ENCODE measurements at regions of chr19 and their contacts with region 1.

Region 1: GRCh38 chr19:17579661-17580244 is 24.3 kb downstream of the COLGALT1 start:
- DNase-seq: peak in 2 of 9 experiments; percentile 36 to 43
- ATAC-seq: peak; percentile 52
- H3K4me3 ChIP-seq: no peak overlapping the region
- H3K4me3 Mint-ChIP-seq: no peak overlapping the region
- H3K27ac ChIP-seq: no peak overlapping the region
- H3K27ac Mint-ChIP-seq: peak overlapping the region; percentile 55
- H3K4me1 ChIP-seq: no peaks in the 10 kb centered on the region
- H3K4me1 Mint-ChIP-seq: no peaks in the 10 kb centered on the region
- H3K27me3 ChIP-seq: no peaks in the 10 kb centered on the region
- H3K27me3 Mint-ChIP-seq: no peaks in the 10 kb centered on the region
- CTCF ChIP-seq: no peak

Region 2: DNA sequence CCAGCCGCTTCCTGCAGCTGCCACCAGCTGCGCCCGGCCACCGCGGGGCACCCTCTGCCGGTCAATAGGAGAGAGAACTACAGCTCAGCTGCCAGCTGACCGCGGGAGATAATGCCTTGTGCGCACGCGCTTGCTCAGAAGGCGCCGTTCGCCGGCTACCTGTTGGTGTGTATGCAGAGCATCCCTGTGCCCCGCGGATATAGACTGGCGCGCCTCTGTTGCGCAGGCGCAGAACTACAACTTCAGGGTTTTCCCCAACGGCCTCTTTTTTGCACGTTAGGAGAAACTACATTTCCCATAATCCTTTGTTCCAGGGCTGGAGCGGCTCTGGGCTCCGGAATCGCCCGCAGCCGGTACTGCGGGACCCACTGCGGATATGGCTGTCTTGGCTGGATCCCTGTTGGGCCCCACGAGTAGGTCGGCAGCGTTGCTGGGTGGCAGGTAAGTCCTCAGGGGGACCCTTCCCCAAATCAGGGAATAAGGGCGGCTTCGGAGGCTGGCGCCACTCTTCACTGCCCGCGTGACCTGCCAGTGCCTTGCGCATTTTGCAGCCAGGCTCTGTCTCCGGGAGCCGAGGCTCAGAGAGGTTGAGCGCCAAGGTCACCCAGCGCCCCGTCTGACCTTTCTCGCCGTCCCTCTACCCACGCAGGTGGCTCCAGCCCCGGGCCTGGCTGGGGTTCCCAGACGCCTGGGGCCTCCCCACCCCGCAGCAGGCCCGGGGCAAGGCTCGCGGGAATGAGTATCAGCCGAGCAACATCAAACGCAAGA is 274.1 kb before region 1 on chr19 and contains the start of gene MRPL34:
- CTCF ChIA-PET with region 1: no interaction called
- POLR2A ChIA-PET with region 1: no interaction called
- intact Hi-C with region 1: no loop called
- DNase-seq: peak; percentile 85 to 99 (median 93)
- ATAC-seq: peak; percentile 53
- H3K4me3 ChIP-seq: peak within 1 kb of the TSS; percentile 77 to 79
- H3K4me3 Mint-ChIP-seq: peak within 1 kb of the TSS; percentile 89
- H3K27ac ChIP-seq: peak within 1 kb of the TSS; percentile 55 to 74
- H3K27ac Mint-ChIP-seq: peak within 1 kb of the TSS; percentile 91
- H3K4me1 ChIP-seq: peaks cover 44% of the 10 kb centered on the region
- H3K4me1 Mint-ChIP-seq: peaks cover 48% of the 10 kb centered on the region
- H3K27me3 ChIP-seq: no peaks in the 10 kb centered on the region
- H3K27me3 Mint-ChIP-seq: no peaks in the 10 kb centered on the region
- CTCF ChIP-seq: peak; percentile 57
- total RNA-seq, gene MRPL34: 29.5 to 33.8 TPM

Region 3: GRCh38 chr19:17389957-17390664 is 189.6 kb before region 1 on chr19:
- CTCF ChIA-PET with region 1: no interaction called
- POLR2A ChIA-PET with region 1: no interaction called
- intact Hi-C with region 1: no loop called
- DNase-seq: peak in 4 of 9 experiments; percentile 9 to 47 (median 34)
- ATAC-seq: no peak
- H3K4me3 ChIP-seq: peak overlapping the region; percentile 63 to 66
- H3K4me3 Mint-ChIP-seq: peak overlapping the region; percentile 87
- H3K27ac ChIP-seq: no peak overlapping the region
- H3K27ac Mint-ChIP-seq: no peak overlapping the region
- H3K4me1 ChIP-seq: peaks cover 20% of the 10 kb centered on the region
- H3K4me1 Mint-ChIP-seq: peaks cover 15% of the 10 kb centered on the region
- H3K27me3 ChIP-seq: no peaks in the 10 kb centered on the region
- H3K27me3 Mint-ChIP-seq: no peaks in the 10 kb centered on the region
- CTCF ChIP-seq: no peak

Region 4: DNA sequence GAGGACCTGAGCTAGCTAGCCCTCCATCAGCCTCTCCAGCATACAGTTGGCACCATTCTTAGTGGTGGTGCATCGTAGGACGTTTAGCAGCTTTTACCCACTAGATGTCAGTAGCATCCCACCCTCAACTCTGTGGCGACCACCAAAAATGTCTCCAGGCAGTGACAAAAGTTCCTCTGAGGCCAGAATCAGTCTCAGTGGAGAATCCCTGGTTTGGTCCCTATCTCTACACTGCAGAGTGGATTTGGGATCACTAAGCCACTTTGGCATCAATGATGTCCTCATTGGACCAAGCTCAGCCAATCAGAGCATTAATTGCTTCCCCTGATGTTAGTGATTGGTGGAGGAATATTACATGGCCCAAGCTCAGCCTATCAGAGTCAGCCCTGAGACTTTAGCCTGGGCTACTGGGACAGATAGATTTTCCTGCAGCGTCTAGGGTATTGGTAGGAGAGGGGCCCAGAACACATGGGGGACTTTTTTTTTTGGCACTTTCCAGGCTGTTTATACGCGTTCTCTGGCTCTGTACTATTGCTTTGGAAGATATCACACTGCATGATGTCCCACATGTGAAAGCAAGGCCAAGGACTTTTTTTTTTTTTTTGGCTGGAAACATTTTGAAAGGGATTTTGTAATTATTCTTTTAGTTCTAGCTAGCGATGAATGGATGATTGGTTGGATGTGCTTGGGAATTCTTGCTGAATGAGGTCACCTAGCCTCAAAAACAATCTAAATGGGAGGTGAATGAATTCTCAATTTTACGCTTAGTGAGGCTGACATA is 138.3 kb before region 1 on chr19:
- CTCF ChIA-PET with region 1: interaction called, 4 read pairs
- POLR2A ChIA-PET with region 1: no interaction called
- intact Hi-C with region 1: loop called (anchors 1 kb)
- DNase-seq: peak in 5 of 9 experiments; percentile 21 to 64 (median 52)
- ATAC-seq: peak; percentile 69
- H3K4me3 ChIP-seq: no peak overlapping the region
- H3K4me3 Mint-ChIP-seq: no peak overlapping the region
- H3K27ac ChIP-seq: no peak overlapping the region
- H3K27ac Mint-ChIP-seq: no peak overlapping the region
- H3K4me1 ChIP-seq: no peaks in the 10 kb centered on the region
- H3K4me1 Mint-ChIP-seq: no peaks in the 10 kb centered on the region
- H3K27me3 ChIP-seq: no peaks in the 10 kb centered on the region
- H3K27me3 Mint-ChIP-seq: no peaks in the 10 kb centered on the region
- CTCF ChIP-seq: peak; percentile 33

Region 5: DNA sequence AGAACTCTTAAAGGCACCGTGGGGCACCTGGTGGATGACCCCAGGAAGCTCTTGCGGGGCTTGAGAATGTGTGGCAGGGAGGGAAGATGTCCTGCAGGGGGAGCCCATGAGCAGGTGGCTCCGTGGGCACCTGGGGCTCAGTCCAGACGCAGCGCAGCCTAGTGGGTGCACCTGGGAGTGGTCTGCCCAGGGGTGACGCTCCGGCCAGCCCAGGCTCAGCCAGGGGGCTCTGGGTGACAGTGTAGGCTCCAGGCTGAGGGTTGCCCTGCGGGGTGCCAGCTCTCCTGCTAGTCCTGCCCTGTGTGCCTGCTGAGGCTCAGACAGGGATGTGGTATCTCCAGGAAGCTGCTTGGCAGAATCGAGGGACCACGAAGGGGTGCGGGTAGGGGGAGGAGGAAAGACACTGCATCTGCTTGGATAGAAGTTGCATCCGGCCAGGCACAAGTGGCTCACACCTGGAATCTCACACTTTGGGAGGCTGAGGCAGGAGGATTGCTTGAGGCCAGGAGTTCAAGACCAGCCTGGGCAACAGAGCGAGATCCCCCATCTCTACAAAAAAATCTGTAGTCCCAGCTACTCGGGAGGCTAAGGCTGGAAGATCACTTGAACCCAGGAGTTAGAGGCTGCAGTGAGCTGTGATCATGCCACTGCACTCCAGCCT is 83.3 kb before region 1 on chr19:
- CTCF ChIA-PET with region 1: interaction called, 55 read pairs
- POLR2A ChIA-PET with region 1: no interaction called
- intact Hi-C with region 1: loop called (anchors 1 to 2 kb)
- DNase-seq: peak; percentile 63 to 90 (median 80)
- ATAC-seq: peak; percentile 99
- H3K4me3 ChIP-seq: no peak overlapping the region
- H3K4me3 Mint-ChIP-seq: no peak overlapping the region
- H3K27ac ChIP-seq: no peak overlapping the region
- H3K27ac Mint-ChIP-seq: no peak overlapping the region
- H3K4me1 ChIP-seq: peaks cover 21% of the 10 kb centered on the region
- H3K4me1 Mint-ChIP-seq: peaks cover 27% of the 10 kb centered on the region
- H3K27me3 ChIP-seq: no peaks in the 10 kb centered on the region
- H3K27me3 Mint-ChIP-seq: no peaks in the 10 kb centered on the region
- CTCF ChIP-seq: peak; percentile 90

Region 6: DNA sequence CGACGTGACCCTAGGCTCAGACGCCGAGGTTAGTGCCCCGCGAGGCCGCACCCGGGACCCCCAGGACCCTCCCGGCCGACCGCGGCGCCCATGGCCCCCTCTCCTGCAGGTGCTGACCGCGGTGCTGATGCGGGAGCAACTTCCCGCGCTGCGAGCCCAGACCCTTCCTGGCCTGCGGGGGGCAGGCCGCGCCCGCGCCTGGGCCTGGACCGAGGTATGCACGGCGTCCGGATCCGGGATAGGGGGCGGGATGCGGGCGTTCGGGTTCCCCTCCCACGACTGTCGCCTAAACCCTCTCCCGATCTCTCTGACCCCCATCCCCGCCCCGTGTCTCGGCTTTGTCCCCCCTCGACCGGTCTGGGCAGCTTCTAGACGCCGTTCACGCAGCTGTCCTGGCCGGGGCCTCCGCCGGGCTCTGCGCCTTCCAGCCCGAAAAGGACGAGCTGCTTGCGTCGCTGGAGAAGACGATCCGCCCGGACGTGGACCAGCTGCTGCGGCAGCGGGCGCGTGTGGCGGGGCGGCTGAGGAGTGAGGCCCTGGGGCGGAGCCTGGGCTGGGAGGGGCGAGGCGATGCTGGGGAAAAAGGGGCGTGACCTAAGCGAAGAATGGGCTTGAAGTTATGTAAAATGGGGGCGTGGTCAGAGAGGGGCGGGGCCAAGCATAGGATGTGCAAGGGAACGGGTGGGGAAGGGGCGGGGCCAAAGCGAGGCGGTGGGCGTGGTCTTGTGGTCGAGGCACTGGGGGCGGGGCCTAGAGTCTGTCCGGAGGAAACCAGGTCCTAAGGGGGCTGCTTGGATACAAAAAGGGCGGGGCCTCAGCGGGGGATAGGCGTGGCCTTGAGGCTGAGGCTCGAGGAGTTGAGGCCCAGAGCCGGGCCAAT is 40.3 kb before region 1 on chr19:
- CTCF ChIA-PET with region 1: interaction called, 3 read pairs
- POLR2A ChIA-PET with region 1: no interaction called
- intact Hi-C with region 1: loop called in 1 of 2 experiments (anchors 1 kb)
- DNase-seq: peak; percentile 83 to 99 (median 96)
- ATAC-seq: peak; percentile 99
- H3K4me3 ChIP-seq: peak overlapping the region; percentile 56 to 63
- H3K4me3 Mint-ChIP-seq: peak overlapping the region; percentile 90
- H3K27ac ChIP-seq: peak overlapping the region; percentile 28 to 37
- H3K27ac Mint-ChIP-seq: peak overlapping the region; percentile 78
- H3K4me1 ChIP-seq: peaks cover 8% of the 10 kb centered on the region
- H3K4me1 Mint-ChIP-seq: peaks cover 11% of the 10 kb centered on the region
- H3K27me3 ChIP-seq: no peaks in the 10 kb centered on the region
- H3K27me3 Mint-ChIP-seq: no peaks in the 10 kb centered on the region
- CTCF ChIP-seq: no peak

Region 7: DNA sequence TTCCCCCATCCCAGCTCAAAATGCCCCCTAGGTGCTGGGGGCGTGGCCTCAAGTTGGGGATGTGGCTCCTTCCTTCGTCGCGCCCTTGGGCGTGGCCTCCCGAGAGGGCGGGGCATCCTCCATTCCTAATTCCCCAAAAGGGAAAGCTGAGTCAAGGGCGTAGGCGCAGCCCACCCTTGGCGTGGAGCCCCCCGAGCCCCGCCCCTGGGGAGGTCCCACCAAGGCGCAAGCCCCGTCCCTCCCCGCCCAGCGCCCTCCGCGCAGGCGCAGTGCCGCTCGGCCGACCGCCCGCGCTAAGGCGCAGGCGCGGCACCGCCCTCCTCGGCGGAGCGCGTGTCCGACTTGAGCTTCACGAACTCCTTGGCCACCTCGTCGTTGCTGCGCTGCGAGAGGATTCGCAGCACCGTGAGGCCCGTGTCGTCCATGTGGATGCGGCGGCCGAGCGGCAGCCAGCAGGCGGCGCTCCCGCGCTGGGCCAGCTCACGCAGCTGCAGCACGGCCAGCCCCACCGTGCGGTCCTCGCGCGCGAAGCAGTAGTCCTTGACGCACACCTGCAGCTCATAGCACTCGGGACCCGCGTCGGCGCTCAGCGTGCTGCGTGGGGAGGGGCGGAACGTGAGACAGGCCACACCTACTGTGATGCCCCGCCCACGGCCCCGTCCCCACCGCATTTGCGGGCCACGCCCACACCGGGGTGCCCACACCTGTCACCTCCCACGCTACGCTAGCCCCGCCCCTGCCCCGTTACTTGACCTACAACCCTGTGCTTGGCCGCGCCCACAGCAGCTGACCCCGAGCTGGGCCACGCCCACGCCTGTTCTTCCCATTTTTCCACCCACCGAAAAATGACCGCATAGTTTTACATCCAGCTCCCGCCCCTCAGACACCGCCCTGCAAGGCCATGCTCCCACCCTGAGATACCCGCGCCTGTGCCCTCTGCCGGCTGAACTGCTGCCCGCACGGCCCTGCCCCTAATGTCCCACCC is 26.3 kb after region 1 on chr19:
- CTCF ChIA-PET with region 1: no interaction called
- POLR2A ChIA-PET with region 1: no interaction called
- intact Hi-C with region 1: no loop called
- DNase-seq: peak; percentile 61 to 94 (median 80)
- ATAC-seq: peak; percentile 98
- H3K4me3 ChIP-seq: peak overlapping the region; percentile 27 to 69
- H3K4me3 Mint-ChIP-seq: peak overlapping the region; percentile 80
- H3K27ac ChIP-seq: peak overlapping the region in 1 of 2 experiments; percentile 51
- H3K27ac Mint-ChIP-seq: no peak overlapping the region
- H3K4me1 ChIP-seq: peaks cover 10% of the 10 kb centered on the region
- H3K4me1 Mint-ChIP-seq: peaks cover 8% of the 10 kb centered on the region
- H3K27me3 ChIP-seq: peaks cover 6 to 7% of the 10 kb centered on the region in 2 experiments
- H3K27me3 Mint-ChIP-seq: peaks cover 32% of the 10 kb centered on the region
- CTCF ChIP-seq: peak; percentile 75